Activated naive CD4-positive, alpha-beta T cell treated with anti-CD3 and anti-CD28 coated beads for 36 hours (primary cell): ENCODE measurements at regions of chr7 and their contacts with region 1.

Region 1: GRCh38 chr7:132580717-132581285 is 4.5 kb upstream of the PLXNA4 start:
- DNase-seq: peak; percentile 84
- H3K4me3 Mint-ChIP-seq: no peak overlapping the region
- H3K27ac Mint-ChIP-seq: no peak overlapping the region
- H3K4me1 Mint-ChIP-seq: no peaks in the 10 kb centered on the region
- H3K27me3 Mint-ChIP-seq: peaks cover 28% of the 10 kb centered on the region

Region 2: DNA sequence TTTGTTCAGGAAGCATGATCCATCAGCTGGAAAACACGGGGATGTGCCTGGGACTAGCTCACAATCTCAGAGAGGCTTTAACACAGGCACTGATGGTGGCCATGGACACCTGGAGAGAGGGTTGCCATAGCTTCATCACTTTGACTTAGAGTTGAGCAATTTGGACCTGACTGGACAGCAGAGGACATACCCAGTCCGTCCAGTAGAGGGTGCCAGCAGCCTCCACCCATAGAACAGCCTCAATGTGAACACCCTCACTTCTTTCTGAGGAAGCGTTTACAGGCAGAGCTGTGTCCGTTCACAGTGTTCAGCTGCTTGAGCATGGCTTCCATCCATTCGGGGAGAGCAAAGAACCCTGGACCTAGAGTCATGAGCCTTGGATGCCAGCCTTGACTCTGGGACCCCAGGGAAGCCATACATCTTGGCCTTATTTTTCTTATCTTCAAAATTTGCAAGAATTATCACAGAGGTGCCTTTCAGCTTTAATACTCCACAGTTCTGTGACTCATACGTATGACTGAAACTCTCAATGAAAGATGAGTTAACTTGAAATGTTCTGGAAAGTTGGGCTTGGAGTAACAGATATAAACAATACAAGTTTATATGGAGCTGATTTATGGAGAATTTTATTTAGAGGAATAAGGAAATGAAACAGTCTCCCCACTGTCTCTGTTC is 721.5 kb before region 1 on chr7:
- CTCF ChIA-PET with region 1: no interaction called
- intact Hi-C with region 1: loop called (anchors 2 kb)
- DNase-seq: peak; percentile 62
- H3K4me3 Mint-ChIP-seq: no peak overlapping the region
- H3K27ac Mint-ChIP-seq: no peak overlapping the region
- H3K4me1 Mint-ChIP-seq: no peaks in the 10 kb centered on the region
- H3K27me3 Mint-ChIP-seq: peaks cover 5% of the 10 kb centered on the region

Region 3: GRCh38 chr7:132318352-132319318 is 262.2 kb before region 1 on chr7:
- CTCF ChIA-PET with region 1: interaction called, 69 read pairs
- intact Hi-C with region 1: loop called (anchors 1 kb)
- DNase-seq: peak; percentile 83
- H3K4me3 Mint-ChIP-seq: no peak overlapping the region
- H3K27ac Mint-ChIP-seq: no peak overlapping the region
- H3K4me1 Mint-ChIP-seq: peaks cover 10% of the 10 kb centered on the region
- H3K27me3 Mint-ChIP-seq: peaks cover 39% of the 10 kb centered on the region

Region 4: DNA sequence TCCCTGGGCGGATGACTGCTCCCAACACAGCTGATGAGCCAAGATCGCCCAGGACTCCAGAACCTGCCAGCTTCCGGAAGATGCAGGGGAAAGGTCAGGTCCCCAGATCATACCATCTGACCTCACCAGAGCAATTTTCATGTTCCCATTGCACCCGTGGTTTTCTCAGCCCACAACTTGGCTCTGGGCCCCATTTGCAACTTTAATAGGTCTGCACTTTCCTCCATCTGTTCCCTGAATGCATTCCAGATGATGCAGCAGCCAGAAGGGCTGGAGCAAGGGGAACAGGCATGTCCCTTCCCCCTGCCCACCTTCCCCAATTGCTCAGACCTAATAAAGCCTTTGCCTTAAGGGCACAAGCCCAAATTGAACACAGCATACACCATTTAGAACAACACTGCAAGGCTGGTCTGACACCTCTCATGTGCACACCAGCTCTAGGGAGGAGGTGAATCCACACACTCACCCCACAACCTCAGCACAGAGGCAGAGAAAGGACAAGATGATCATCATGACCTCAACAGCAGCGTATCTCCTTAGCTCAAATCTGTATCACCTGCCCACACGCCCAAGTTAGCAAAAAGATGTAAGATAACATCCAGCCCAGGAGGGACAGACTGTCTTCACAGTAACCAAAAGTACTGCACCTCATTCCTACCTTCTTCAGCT is 92.0 kb before region 1 on chr7:
- CTCF ChIA-PET with region 1: no interaction called
- intact Hi-C with region 1: loop called (anchors 5 kb)
- DNase-seq: no peak
- H3K4me3 Mint-ChIP-seq: no peak overlapping the region
- H3K27ac Mint-ChIP-seq: no peak overlapping the region
- H3K4me1 Mint-ChIP-seq: peaks cover 34% of the 10 kb centered on the region
- H3K27me3 Mint-ChIP-seq: no peaks in the 10 kb centered on the region

Region 5: DNA sequence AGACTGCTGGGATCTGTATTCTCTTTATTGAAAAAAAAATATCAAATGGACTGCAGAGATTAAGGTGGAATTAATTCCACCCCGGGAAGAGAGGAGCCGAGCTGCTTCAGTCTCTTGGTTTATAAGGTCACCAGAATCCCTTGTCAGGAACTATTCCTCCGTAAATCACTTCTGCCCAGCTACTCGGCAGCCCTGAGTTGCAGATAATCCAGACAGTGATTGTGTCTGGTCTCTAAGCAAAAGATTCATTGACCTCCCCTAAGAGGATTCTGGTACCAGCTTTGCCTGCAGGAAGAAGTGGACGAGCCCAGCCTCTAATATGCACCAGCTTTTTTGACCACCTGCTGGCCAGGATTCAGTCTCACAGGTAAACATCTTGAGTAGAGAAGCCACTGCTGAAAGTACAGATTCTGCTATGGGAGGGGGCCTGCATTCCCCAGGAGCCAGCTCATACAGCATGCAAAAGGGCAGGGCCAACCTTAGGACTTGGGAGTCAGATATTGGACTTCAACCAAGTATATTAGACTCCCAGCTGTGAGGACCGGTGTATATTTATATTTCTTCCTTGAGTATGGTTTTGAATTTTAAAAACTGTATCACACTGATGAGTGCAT is 22.5 kb after region 1 on chr7:
- CTCF ChIA-PET with region 1: interaction called, 12 read pairs
- intact Hi-C with region 1: no loop called
- DNase-seq: no peak
- H3K4me3 Mint-ChIP-seq: no peak overlapping the region
- H3K27ac Mint-ChIP-seq: no peak overlapping the region
- H3K4me1 Mint-ChIP-seq: no peaks in the 10 kb centered on the region
- H3K27me3 Mint-ChIP-seq: peaks cover 6% of the 10 kb centered on the region

Region 6: DNA sequence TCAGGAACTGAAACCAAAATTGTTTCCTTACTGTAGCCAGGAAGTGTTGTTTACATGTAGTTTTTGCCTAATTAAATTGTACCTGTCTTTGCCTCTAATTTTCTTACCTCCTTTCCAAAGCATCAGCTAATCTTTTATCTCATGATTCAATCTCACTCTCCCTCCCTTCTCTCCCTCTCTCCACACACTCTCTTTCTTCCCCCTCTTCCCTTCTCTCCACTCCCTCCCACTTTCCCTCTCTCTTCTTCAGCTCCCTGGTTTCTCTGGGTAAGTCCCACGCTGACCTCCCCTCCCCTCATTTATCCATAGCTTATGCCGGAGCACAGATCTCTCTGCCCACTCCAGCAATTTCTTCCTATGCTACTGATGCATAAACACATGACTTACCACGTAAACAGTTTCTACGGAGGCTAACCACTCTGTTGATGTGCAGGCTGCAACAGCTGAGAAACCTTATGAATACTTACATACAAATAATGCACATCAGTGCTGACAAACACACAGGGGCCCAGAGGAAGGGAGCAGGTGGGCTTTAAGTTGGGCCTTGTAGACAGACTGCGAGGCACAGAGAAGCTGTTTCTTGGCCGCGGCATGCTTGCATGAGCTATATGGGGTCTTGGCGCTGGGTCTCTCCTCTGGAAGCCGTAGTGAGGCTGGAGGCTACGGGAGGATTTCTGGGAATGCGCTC is 169.9 kb after region 1 on chr7:
- CTCF ChIA-PET with region 1: no interaction called
- intact Hi-C with region 1: no loop called
- DNase-seq: no peak
- H3K4me3 Mint-ChIP-seq: no peak overlapping the region
- H3K27ac Mint-ChIP-seq: no peak overlapping the region
- H3K4me1 Mint-ChIP-seq: no peaks in the 10 kb centered on the region
- H3K27me3 Mint-ChIP-seq: peaks cover 2% of the 10 kb centered on the region

Region 7: GRCh38 chr7:132783824-132784223 is 203.0 kb after region 1 on chr7:
- CTCF ChIA-PET with region 1: no interaction called
- intact Hi-C with region 1: no loop called
- DNase-seq: no peak
- H3K4me3 Mint-ChIP-seq: no peak overlapping the region
- H3K27ac Mint-ChIP-seq: no peak overlapping the region
- H3K4me1 Mint-ChIP-seq: peaks cover 6% of the 10 kb centered on the region
- H3K27me3 Mint-ChIP-seq: no peaks in the 10 kb centered on the region